ENCODE measurements at regions of chr3 and their contacts with region 1.

Region 1: DNA sequence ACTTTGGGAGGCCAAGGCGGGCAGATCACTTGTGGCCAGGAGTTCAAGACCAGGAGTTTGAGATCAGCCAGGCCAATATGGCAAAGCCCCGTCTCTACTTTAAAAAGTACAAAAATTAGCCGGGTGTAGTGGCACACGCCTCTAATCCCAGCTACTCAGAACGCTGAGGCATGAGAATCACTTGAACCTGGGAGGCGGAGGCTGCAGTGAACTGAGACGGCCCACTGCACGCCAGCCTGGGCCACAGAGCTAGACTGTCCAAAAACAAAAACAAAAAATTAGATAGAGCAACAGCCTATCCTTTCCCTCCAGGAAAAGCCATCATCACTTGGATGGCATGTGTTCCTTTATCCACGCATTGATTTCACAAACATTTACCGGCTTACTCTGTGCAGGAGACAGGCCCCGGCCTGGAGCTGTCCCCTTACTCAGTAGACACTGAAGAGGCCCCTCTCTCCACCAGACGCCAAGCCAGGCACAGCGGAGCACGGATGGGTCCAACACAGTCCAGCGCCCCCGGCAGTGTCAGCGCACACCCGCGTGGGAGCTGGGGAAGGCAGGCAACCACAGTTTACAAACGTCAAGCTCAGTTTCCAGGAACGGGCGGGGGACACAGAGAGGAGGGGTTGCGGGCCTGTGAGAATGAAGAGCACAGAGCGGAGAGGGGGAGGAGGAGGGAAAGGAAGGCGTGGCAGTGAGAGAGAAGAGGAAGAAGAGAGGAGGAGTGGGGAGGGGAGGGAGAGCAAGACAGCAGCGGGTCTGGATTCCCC is 3.1 kb downstream of the GP5 start:
- DNase-seq: peak; percentile 72
- H3K4me3 Mint-ChIP-seq: peak overlapping the region; percentile 66
- H3K27ac Mint-ChIP-seq: peak overlapping the region; percentile 84
- H3K4me1 Mint-ChIP-seq: peaks cover 54% of the 10 kb centered on the region
- H3K27me3 Mint-ChIP-seq: peaks cover 25% of the 10 kb centered on the region

Region 2: GRCh38 chr3:194333212-194333980 is 62.6 kb before region 1 on chr3:
- CTCF ChIA-PET with region 1: interaction called, 11 read pairs
- POLR2A ChIA-PET with region 1: no interaction called
- DNase-seq: peak; percentile 87
- H3K4me3 Mint-ChIP-seq: peak overlapping the region; percentile 71
- H3K27ac Mint-ChIP-seq: no peak overlapping the region
- H3K4me1 Mint-ChIP-seq: peaks cover 11% of the 10 kb centered on the region
- H3K27me3 Mint-ChIP-seq: peaks cover 22% of the 10 kb centered on the region

Measured in activated CD4-positive, alpha-beta T cell treated with anti-CD3 and anti-CD28 coated beads, Interleukin-2, amount 10 ng/mL, durations not matched to agents 7 days and 5 days (primary cell).